Activated T-helper 2 cell treated with anti-CD3 and anti-CD28 coated beads, Interferon-gamma antibody, Interleukin-2, Interleukin-4, amounts not matched to agents 10 μg/mL and 5 μg/mL and 100 μg/mL, durations not matched to agents 14 hours and 24 hours and 36 hours (primary cell): ENCODE measurements at regions of chr2 and their contacts with region 1.

Region 1: DNA sequence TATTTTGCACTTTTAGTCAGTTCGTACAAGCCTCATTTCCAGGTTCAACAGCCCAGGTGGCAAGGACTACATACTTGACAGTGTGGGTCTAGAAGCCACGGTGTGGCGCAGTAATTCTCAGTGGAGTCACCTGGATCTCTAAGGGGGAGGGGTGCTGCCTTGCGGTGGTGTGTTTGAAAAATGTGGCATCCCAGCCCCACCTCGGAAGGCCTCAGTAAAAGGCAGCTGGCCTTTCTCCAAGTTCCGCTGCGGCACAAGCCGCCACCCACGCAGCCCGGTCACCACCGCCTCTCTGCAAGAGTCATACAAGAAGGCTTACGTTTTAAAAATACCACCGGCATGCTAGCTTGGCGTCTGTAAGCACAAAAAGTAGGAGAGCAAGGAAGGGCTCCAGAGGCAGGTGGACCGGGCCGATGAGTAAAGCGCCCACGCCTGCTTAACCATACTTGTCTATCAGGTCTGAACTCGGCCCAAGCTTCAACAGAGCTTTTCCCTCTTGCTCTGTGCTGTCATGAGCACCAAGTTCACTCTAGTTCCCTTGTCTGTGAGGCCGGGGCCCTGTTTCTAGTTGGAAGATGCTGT is 49.5 kb downstream of the SPRED2 start:
- DNase-seq: peak; percentile 57
- H3K4me3 Mint-ChIP-seq: no peak overlapping the region
- H3K27ac Mint-ChIP-seq: peak overlapping the region; percentile 19
- H3K4me1 Mint-ChIP-seq: peaks cover 44% of the 10 kb centered on the region
- H3K27me3 Mint-ChIP-seq: peaks cover 19% of the 10 kb centered on the region

Region 2: DNA sequence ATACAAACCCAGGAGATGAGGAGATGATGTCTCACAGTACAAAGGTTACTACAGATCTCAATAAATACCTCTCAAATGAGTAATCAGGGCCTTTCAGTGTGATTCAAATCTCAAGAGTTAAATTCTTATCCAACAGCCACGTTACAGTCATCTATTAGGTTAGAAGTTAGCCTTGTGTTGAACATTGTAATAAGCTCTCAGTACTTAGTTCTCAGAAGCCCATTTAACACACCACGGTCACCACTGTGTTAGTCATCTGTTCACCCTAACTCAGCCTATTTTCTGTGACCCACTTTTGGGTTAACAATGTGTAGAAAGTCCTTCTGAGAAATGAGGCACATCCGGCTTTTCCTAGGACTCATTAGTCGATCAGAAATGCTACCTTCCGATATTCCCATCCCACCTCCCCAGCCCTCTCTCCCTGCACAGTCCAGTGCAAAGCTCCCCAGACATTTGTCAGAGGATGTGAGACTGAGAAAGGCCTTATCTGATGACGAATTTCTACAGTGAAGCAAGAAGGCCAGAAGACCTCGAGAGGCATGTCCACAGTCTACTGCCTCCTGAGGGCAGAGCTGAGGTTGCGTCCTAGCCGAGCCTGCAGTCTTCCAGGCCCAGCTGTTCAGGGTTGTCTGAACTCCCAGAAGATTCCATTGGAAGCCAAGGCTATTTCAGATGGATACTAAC is 62.7 kb before region 1 on chr2:
- intact Hi-C with region 1: loop called (anchors 2 kb)
- DNase-seq: no peak
- H3K4me3 Mint-ChIP-seq: no peak overlapping the region
- H3K27ac Mint-ChIP-seq: peak overlapping the region; percentile 64
- H3K4me1 Mint-ChIP-seq: peaks cover 21% of the 10 kb centered on the region
- H3K27me3 Mint-ChIP-seq: peaks cover 2% of the 10 kb centered on the region

Region 3: GRCh38 chr2:65357095-65357958 is 25.5 kb before region 1 on chr2:
- intact Hi-C with region 1: loop called (anchors 1 kb)
- DNase-seq: no peak
- H3K4me3 Mint-ChIP-seq: no peak overlapping the region
- H3K27ac Mint-ChIP-seq: no peak overlapping the region
- H3K4me1 Mint-ChIP-seq: peaks cover 59% of the 10 kb centered on the region
- H3K27me3 Mint-ChIP-seq: peaks cover 16% of the 10 kb centered on the region

Region 4: DNA sequence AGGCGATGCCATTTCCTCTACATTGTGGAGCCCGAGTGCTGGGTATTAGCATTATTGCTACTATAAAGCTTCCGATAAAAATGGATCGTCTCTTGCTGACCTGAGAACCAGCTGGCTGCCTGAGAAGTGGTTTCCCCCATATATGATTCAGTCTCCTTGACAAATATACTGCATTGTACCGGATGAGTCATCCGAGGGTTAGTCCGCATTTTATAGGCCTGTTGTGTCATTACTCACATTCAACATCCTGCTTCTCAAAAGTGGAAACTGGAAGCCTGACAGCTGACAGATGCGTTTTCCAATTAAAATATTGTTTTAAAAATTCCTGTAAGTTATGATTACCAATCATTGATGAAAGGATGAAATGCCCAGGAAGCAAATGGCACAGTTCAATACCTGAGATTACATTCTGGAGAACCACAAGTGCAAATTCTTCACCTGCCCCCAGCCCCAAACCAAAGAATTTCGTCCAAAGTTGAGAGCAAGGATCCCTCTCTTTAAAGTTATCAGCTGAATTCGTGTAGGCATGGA is 16.2 kb before region 1 on chr2:
- intact Hi-C with region 1: loop called (anchors 1 kb)
- DNase-seq: no peak
- H3K4me3 Mint-ChIP-seq: no peak overlapping the region
- H3K27ac Mint-ChIP-seq: no peak overlapping the region
- H3K4me1 Mint-ChIP-seq: peaks cover 20% of the 10 kb centered on the region
- H3K27me3 Mint-ChIP-seq: peaks cover 31% of the 10 kb centered on the region

Region 5: DNA sequence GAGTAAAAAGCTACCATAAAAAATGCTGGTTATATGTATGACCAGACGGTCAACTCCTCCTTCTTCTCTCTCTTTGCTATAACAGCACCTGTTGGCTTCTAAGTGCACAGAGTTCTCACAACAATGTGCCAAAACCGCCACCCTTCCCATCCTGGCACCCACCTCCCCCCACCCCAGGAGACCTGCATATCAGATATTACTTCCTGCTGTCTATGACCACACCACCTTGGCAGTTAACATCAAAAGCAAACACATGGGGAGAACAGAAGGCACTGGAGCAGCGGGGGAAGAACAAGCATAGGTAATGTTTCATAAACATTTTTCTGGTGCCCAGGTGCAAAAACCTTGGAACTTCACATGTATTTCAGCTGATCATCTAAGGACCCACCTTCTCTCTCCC is 34.1 kb after region 1 on chr2:
- intact Hi-C with region 1: loop called (anchors 2 kb)
- DNase-seq: no peak
- H3K4me3 Mint-ChIP-seq: no peak overlapping the region
- H3K27ac Mint-ChIP-seq: peak overlapping the region; percentile 52
- H3K4me1 Mint-ChIP-seq: peaks cover 35% of the 10 kb centered on the region
- H3K27me3 Mint-ChIP-seq: peaks cover 16% of the 10 kb centered on the region

Region 6: DNA sequence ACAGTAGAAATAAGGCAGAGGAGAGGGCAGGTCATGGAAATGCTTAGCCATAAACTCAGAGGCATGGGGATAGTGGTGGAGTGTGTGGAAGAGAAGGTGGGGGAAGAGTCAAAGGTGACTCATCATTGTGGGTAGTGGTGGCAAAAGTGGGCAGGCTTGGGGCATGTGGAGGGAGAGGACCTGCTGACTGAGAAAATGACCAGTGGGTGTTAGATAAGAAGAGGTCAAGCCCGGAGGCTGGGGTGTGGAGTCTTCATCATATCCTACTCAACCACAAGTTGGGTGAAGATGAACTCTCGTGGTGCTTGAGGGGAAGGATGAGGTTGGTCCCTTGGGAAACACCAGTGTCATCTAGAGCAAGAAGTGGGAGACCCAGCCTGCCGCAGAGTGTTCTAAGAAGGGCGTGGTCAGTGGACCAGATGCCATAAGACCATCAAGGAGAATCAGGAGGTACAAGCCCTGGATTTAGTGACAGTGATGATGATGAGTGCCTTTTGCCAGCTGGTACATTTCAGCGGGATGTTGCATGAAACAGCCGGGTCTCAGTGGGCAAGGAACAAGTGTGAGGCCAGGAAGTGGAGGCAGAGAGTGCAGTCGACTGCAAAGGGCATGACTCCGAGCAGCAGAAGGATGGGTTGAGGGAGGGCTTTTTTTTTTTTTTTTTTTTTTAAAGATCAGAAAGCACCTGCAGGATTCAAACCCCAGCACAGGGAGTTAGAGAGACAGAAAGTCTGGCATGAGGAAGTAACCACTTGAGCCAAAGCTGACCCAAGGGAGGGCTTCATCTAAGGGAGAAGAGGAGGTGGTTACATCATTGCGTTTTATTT is 172.1 kb after region 1 on chr2:
- intact Hi-C with region 1: loop called (anchors 5 kb)
- DNase-seq: no peak
- H3K4me3 Mint-ChIP-seq: no peak overlapping the region
- H3K27ac Mint-ChIP-seq: no peak overlapping the region
- H3K4me1 Mint-ChIP-seq: peaks cover 16% of the 10 kb centered on the region
- H3K27me3 Mint-ChIP-seq: peaks cover 27% of the 10 kb centered on the region